HCT116 (cell line): ENCODE measurements at regions of chr9 and their contacts with region 1.

Region 1: GRCh38 chr9:71895117-71895516 is 15.9 kb downstream of the ABHD17B start:
- DNase-seq: no peak
- ATAC-seq: no peak
- H3K4me3 ChIP-seq: no peak overlapping the region
- H3K27ac ChIP-seq: no peak overlapping the region
- H3K4me1 ChIP-seq: no peaks in the 10 kb centered on the region
- H3K27me3 ChIP-seq: no peaks in the 10 kb centered on the region
- CTCF ChIP-seq: no peak
- POLR2A ChIP-seq: no peak
- RAD21 ChIP-seq: no peak

Region 2: DNA sequence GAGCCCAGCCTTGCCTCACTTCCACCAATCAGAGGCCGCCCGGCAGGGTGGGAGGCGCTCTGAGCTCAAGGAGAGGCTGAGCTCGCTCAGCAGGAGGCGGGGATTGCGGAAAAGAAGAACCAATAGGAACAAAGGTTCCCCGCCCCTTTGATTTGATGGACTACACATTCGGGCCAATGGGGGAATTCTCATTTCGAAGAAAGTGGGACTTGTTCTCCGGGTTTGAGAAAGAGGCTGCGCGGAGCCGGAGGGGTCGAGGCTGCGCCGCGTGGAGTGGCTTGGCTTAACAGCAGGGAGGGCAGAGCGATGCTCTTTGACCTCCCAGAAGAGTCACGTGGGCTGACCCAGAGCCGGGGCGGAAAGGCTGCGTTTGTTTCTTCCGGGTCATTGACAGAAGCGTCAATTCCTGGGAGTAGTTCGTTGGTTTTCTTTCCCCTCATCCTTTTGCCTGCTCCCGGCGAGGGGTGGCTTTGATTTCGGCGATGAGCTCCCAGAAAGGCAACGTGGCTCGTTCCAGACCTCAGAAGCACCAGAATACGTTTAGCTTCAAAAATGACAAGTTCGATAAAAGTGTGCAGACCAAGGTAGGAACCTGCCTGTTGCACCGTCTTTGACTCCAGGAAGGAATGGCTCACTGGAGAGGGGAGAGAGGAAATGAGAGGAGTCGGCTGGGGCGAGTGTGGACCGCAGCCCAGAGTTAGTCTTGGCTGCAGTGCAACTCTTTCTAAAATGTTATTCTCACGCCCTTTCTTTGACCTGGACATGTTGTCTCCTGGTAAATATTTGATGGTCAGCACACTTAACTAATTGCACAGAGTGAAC is 16.3 kb after region 1 on chr9 and contains the start of gene C9orf85:
- CTCF ChIA-PET with region 1: no interaction called
- POLR2A ChIA-PET with region 1: interaction called, 10 read pairs
- RAD21 ChIA-PET with region 1: no interaction called
- intact Hi-C with region 1: no loop called
- DNase-seq: peak; percentile 99
- ATAC-seq: peak; percentile 92
- H3K4me3 ChIP-seq: peak within 1 kb of the TSS; percentile 77 to 89
- H3K27ac ChIP-seq: peak within 1 kb of the TSS; percentile 90
- H3K4me1 ChIP-seq: peaks cover 5 to 16% of the 10 kb centered on the region in 2 experiments
- H3K27me3 ChIP-seq: no peaks in the 10 kb centered on the region
- CTCF ChIP-seq: no peak
- POLR2A ChIP-seq: peak; percentile 56
- RAD21 ChIP-seq: no peak
- total RNA-seq, gene C9orf85: 12.4 TPM